ENCODE measurements at regions of chr15 and their contacts with region 1.

Region 1: DNA sequence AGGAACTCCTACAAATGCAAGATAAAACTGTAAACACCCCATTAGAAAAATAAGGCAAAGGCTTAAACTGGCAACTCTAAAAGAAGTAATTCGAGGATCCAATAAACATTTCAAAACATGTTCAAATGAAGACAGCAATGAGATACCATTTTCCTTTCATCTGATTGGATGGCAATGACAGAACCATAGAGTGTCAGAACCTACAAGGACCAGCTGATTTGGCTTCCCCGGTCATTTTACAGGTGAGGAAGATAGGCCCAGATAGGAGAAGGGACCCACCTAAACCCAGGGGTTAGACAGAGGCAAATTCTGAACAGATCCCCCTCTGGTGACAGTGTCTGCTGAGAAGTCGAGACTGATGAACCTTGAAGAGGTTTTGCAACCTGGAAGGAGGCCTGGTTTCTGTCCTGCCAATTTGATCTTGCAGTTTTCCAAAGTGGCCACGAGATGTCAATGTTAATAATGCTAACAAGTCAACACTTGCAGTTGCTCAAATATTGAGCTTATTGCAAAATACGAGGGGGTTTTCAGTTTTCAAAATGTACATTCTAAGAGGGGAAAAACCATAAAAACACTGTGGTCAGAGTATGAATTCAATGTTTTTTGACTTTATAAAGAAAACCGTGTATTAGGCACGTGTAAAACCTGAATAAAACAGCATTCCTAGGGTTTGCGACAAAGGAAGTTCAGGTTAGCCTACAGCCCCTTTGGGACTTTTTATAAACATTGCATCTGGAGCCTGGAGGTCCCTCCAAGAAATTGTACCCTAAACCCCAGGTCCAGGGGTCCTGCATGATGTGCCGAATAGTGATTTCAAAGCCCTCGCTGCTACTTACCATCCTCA is 21.5 kb downstream of the CFAP161 start:
- DNase-seq: peak; percentile 46
- H3K4me3 ChIP-seq: no peak overlapping the region
- H3K27ac ChIP-seq: no peak overlapping the region
- H3K4me1 ChIP-seq: peaks cover 0 to 9% of the 10 kb centered on the region in 2 experiments; a peak in 1 of 4 replicates
- H3K27me3 ChIP-seq: no peaks in the 10 kb centered on the region
- CTCF ChIP-seq: peak; percentile 55
- EP300 ChIP-seq: no peak
- RAD21 ChIP-seq: peak; percentile 82

Region 2: GRCh38 chr15:81106560-81106959 is 49.0 kb before region 1 on chr15:
- CTCF ChIA-PET with region 1: interaction called, 56 read pairs
- POLR2A ChIA-PET with region 1: no interaction called
- DNase-seq: peak; percentile 70
- H3K4me3 ChIP-seq: no peak overlapping the region; a peak in 1 of 4 replicates
- H3K27ac ChIP-seq: no peak overlapping the region
- H3K4me1 ChIP-seq: no peaks in the 10 kb centered on the region
- H3K27me3 ChIP-seq: peaks cover 5% of the 10 kb centered on the region; the same call in 1 of the 2 replicates
- CTCF ChIP-seq: peak; percentile 81
- EP300 ChIP-seq: no peak
- RAD21 ChIP-seq: peak; percentile 94

Region 3: GRCh38 chr15:81133782-81134461 is 21.7 kb before region 1 on chr15 and contains the start of gene CFAP161:
- CTCF ChIA-PET with region 1: interaction called, 11 read pairs
- POLR2A ChIA-PET with region 1: interaction called, 3 read pairs
- DNase-seq: peak; percentile 93
- H3K4me3 ChIP-seq: peak within 1 kb of the TSS; percentile 46 to 62
- H3K27ac ChIP-seq: peak within 1 kb of the TSS in 1 of 2 experiments; percentile 75; a peak in 2 of 4 replicates
- H3K4me1 ChIP-seq: peaks cover 0 to 5% of the 10 kb centered on the region in 2 experiments; a peak in 1 of 4 replicates
- H3K27me3 ChIP-seq: no peaks in the 10 kb centered on the region; the same call in 1 of the 2 replicates
- CTCF ChIP-seq: no peak
- EP300 ChIP-seq: peak in 1 of 2 experiments; percentile 23; a peak in 1 of 4 replicates
- RAD21 ChIP-seq: no peak
- polyA plus RNA-seq, gene CFAP161: 0.03 TPM in 1 of 2 replicates, not detected in the other

Region 4: DNA sequence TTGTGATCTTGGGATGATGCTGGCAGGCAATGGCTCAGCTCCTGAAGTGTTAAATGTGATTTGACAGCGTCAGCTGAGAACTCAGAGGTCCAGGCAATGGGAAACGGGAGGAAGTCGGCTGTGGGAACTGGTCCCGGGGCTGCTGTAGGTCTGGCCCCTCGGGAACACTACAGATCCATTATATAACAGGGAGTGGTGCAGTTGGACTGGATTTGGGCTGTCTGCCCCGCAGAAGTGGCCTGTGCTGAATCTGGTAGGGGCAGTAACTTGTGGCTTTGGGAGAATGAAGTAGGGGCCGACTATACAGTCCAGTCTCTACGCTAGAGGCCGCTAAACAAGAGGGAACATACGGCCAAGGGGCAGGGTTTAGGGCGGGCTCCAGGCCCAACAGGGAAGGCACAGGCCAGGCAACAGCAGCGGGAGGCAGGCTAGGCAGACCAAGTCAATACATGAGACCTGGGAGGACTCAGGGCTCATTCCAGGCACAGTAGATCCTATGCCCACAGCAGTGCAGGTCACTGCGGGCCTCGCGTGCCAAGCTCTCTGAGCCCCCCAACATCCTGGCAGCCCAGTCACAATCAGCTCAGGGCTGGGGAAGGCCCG is 20.8 kb after region 1 on chr15:
- CTCF ChIA-PET with region 1: interaction called, 10 read pairs
- POLR2A ChIA-PET with region 1: interaction called, 4 read pairs
- DNase-seq: no peak
- H3K4me3 ChIP-seq: no peak overlapping the region
- H3K27ac ChIP-seq: no peak overlapping the region
- H3K4me1 ChIP-seq: no peaks in the 10 kb centered on the region
- H3K27me3 ChIP-seq: no peaks in the 10 kb centered on the region
- CTCF ChIP-seq: no peak
- EP300 ChIP-seq: no peak
- RAD21 ChIP-seq: no peak

Region 5: GRCh38 chr15:81256916-81257315 is 101.3 kb after region 1 on chr15:
- CTCF ChIA-PET with region 1: interaction called, 395 read pairs
- POLR2A ChIA-PET with region 1: no interaction called
- DNase-seq: peak; percentile 24
- H3K4me3 ChIP-seq: no peak overlapping the region
- H3K27ac ChIP-seq: no peak overlapping the region
- H3K4me1 ChIP-seq: no peaks in the 10 kb centered on the region
- H3K27me3 ChIP-seq: peaks cover 12% of the 10 kb centered on the region; the same call in 1 of the 2 replicates
- CTCF ChIP-seq: peak; percentile 58
- EP300 ChIP-seq: no peak
- RAD21 ChIP-seq: peak; percentile 66

Measured in SK-N-SH (cell line).